ENCODE measurements at regions of chr1 and their contacts with region 1.

Region 1: GRCh38 chr1:43373066-43373940 is 5.5 kb upstream of the ELOVL1 start:
- DNase-seq: no peak
- ATAC-seq: peak; percentile 67

Region 2: GRCh38 chr1:43199064-43199726 is 174.1 kb before region 1 on chr1:
- intact Hi-C with region 1: no loop called
- DNase-seq: no peak
- ATAC-seq: no peak

Region 3: GRCh38 chr1:43238085-43238484 is 135.2 kb before region 1 on chr1:
- intact Hi-C with region 1: loop called (anchors 5 kb)
- DNase-seq: peak; percentile 61
- ATAC-seq: peak; percentile 82

Region 4: GRCh38 chr1:43414634-43415223 is 41.4 kb after region 1 on chr1:
- intact Hi-C with region 1: no loop called
- DNase-seq: peak; percentile 44
- ATAC-seq: peak; percentile 84

Region 5: DNA sequence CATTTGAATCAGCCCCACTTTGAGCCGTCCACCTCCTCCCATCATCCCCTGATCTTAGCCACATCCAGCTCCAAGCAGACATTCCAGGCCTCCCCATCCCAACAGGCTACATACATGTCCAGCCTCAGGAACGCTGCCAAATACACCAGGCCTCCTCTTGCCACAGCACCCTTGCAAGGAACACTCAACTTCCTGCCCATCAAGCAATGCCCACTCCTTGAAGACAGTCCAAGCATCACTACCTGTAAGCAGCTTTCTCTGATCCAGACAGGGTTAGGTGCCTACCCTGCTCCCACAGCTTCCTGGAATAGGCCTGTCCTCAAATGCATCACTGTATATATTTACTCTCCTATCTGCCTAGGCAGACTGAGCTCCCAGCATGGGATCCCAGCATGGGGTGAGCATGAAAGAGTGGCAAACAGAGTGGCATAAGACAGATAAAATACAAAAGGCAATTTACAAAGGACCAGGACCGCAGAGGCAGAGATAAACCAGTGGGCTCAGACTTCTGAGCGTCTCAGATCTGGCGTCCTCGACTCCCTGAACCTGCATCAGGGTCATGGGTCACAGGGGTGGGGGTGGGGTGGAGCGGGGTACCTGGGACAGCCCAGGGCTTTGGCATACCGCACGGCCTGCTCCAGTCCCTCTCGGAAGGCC is 79.6 kb after region 1 on chr1:
- intact Hi-C with region 1: no loop called
- DNase-seq: no peak
- ATAC-seq: peak; percentile 14

Measured in left ventricle myocardium superior (tissue), 1 donor.